Colonic mucosa (tissue), 4 donors: ENCODE measurements at regions of chr16 and their contacts with region 1.

Region 1: DNA sequence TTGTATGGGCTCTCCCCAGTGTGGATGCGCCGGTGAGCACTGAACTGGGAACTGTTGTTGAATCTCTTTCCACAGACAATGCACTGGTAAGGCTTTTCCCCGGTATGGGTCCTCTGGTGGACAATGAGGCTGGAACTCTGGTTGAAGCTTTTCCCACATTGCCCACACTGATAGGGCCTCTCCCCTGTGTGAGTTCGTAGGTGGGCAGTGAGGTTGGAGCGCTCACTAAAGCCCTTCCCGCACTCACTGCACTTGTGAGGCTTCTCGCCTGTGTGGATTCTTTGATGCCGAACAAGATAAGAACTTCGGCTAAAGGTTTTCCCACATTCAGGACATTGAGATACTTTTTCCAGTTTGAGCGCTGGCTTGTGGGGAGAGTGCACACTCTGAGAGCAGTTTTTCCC is 17.8 kb downstream of the ZSCAN32 start:
- DNase-seq: no peak
- H3K4me3 ChIP-seq: no peak overlapping the region
- H3K27ac ChIP-seq: no peak overlapping the region
- H3K4me1 ChIP-seq: no peaks in the 10 kb centered on the region
- H3K27me3 ChIP-seq: no peaks in the 10 kb centered on the region
- CTCF ChIP-seq: no peak

Region 2: GRCh38 chr16:3317315-3317999 is 65.6 kb before region 1 on chr16:
- intact Hi-C with region 1: loop called (anchors 10 kb)
- DNase-seq: no peak
- H3K4me3 ChIP-seq: no peak overlapping the region
- H3K27ac ChIP-seq: no peak overlapping the region
- H3K4me1 ChIP-seq: no peaks in the 10 kb centered on the region
- H3K27me3 ChIP-seq: no peaks in the 10 kb centered on the region
- CTCF ChIP-seq: no peak

Region 3: DNA sequence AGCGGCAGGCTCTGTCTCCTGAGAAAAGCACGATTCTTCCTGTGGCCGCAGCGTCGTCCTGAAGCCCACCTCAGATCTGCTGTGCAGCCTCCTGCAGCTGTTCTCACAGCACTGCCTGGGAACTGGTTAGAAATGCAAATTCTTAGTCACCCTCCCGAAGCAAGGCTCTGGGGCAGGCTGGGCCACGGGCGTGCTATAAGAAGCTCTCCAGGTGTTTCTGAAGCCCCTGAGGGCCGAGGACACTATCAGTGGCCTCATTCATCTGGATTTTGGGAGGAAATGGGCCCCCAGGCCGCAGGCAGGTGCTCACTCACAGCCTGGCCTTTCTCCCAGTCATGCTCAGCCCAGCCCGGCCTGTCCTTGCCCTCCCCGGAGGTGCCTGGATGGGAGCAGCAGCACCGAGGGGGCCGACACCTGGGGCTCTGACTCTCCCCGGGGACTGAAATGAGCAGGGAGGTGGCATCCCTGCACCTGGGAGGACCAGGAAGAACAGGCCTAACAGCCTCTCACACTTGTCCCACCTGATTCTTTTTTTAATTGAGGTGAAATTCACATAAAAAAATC is 204.6 kb after region 1 on chr16:
- intact Hi-C with region 1: no loop called
- DNase-seq: no peak
- H3K4me3 ChIP-seq: no peak overlapping the region
- H3K27ac ChIP-seq: no peak overlapping the region
- H3K4me1 ChIP-seq: no peaks in the 10 kb centered on the region
- H3K27me3 ChIP-seq: no peaks in the 10 kb centered on the region
- CTCF ChIP-seq: no peak